Right lobe of liver (tissue), 6 donors: ENCODE measurements at regions of chr17 and their contacts with region 1.

Region 1: GRCh38 chr17:39671651-39672521 is 3.6 kb downstream of the PNMT start:
- DNase-seq: peak in 2 of 3 donors; percentile 42 to 55
- ATAC-seq: peak; percentile 51 to 64 (median 56)
- H3K4me3 ChIP-seq: no peak overlapping the region
- H3K27ac ChIP-seq: no peak overlapping the region
- H3K4me1 ChIP-seq: peaks cover 0 to 18% (median 3%) of the 10 kb centered on the region in 4 donors
- H3K27me3 ChIP-seq: peaks cover 0 to 4% of the 10 kb centered on the region in 2 donors
- CTCF ChIP-seq: peak; percentile 52 to 63 (median 58)
- POLR2A ChIP-seq: no peak

Region 2: GRCh38 chr17:39729280-39729851 is 57.5 kb after region 1 on chr17:
- intact Hi-C with region 1: loop called in 1 of 2 experiments (anchors 5 kb)
- DNase-seq: no peak
- ATAC-seq: no peak
- H3K4me3 ChIP-seq: peak overlapping the region; percentile 56 to 93 (median 74)
- H3K27ac ChIP-seq: peak overlapping the region in 1 of 3 donors; percentile 91
- H3K4me1 ChIP-seq: peaks cover 0 to 8% (median 3%) of the 10 kb centered on the region in 4 donors
- H3K27me3 ChIP-seq: no peaks in the 10 kb centered on the region
- CTCF ChIP-seq: no peak
- POLR2A ChIP-seq: no peak

Region 3: DNA sequence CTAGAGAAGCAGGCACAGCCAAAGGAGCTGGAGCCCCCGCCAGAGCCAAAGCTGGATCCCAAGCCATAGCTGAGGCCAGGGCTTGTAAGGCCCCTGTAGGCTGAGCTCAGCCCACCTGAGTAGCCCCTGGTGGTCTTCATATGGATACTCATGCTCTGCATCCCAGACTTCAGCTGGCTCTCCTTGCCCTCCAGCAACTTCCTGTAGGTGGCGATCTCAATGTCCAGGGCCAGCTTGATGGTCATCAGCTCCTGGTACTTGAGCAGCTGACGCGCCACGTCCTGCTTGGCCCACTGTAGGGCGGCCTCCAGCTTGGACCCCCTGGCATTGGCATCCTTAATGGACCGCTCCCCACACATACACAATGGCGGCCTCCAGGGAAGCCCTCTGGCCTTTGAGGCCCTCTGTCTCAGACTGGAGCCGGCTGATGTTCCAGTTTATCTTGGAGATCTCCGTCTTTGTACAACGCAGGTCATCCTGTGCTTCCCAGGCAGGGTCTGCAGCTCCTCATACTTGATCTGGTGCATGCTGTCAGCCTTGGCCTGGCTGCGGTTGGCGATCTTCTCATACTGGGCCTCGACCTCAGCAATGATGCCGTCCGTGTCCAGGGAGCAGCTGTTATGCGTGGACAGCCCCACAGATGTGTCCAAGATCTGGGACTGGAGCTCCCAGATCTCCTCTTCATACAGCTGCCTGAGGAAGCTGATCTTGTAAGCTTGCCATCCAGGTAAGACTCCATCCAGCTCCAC is 163.3 kb after region 1 on chr17:
- intact Hi-C with region 1: no loop called
- DNase-seq: no peak
- ATAC-seq: no peak
- H3K4me3 ChIP-seq: no peak overlapping the region
- H3K27ac ChIP-seq: no peak overlapping the region
- H3K4me1 ChIP-seq: no peaks in the 10 kb centered on the region
- H3K27me3 ChIP-seq: no peaks in the 10 kb centered on the region
- CTCF ChIP-seq: peak in 1 of 4 donors; percentile 10
- POLR2A ChIP-seq: no peak